Ovary (tissue), 10 donors: ENCODE measurements at regions of chr7 and their contacts with region 1.

Region 1: DNA sequence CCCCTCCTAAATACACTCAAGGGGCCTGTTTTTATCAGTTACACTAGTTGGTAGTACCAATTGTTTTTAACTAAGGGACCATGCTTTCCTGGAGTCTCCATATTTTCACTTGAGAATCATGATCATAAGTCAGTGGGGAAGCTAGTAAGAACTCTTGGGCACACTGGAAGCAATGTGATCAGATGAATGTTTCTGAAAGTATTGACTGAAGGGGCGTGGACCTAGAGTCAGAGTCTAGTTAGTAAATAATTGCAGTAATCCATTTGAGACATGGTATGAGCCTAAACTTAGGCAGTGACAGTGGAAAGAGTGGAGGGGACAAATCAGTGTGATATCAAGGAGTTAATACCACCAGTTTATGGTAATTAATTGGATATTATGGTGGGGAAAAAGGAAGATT is 125.0 kb downstream of the CDCA7L start:
- DNase-seq: no peak
- H3K4me3 ChIP-seq: no peak overlapping the region
- H3K27ac ChIP-seq: no peak overlapping the region
- H3K4me1 ChIP-seq: no peaks in the 10 kb centered on the region
- H3K27me3 ChIP-seq: no peaks in the 10 kb centered on the region
- CTCF ChIP-seq: no peak
- EP300 ChIP-seq: no peak
- POLR2A ChIP-seq: no peak

Region 2: GRCh38 chr7:22627136-22627535 is 806.4 kb after region 1 on chr7:
- intact Hi-C with region 1: loop called in 1 of 4 experiments (anchors 5 kb)
- DNase-seq: no peak
- H3K4me3 ChIP-seq: no peak overlapping the region
- H3K27ac ChIP-seq: no peak overlapping the region
- H3K4me1 ChIP-seq: no peaks in the 10 kb centered on the region
- H3K27me3 ChIP-seq: no peaks in the 10 kb centered on the region
- CTCF ChIP-seq: no peak
- EP300 ChIP-seq: no peak
- POLR2A ChIP-seq: no peak